ENCODE measurements at regions of chr17 and their contacts with region 1.

Region 1: DNA sequence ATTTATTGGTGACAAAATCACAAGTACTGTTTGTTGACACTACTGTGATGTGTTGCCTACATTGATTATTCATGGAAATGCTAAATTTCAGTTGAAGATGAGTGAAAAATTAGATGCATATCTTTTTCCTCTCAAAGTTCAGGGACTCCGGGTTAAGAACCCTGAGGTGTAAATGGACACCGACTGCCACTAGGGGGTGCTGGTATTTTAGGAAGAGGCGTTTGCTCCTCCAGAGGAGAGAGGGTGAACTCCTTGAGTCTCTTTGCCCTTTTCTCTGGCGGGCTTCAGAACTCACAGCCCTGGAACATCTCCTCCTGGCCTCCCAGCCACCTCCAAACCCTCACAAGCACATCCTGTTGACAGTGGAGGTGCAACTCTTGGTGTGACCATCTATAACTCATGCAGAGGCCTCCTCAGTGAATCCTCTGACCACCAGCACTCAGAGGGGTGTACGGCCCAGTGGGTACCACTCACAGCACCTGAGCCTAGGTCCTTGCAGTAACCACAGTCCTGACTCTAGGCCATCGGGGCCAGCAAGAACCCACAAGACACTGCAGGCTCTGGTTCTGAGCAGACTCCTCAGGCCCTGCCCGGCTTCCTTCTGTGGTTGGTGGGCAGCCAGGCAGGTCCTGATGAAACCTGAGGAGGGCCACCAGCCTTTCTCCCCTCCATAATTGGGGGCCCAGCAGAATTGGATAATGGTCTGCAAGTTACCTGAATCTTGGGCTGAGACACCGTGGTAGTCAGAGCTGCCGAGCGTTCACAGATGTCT is 26.2 kb upstream of the PIK3R5 start:
- DNase-seq: peak in 4 of 5 donors; percentile 44 to 63 (median 57)
- ATAC-seq: peak in 3 of 4 donors; percentile 67 to 77 (median 74)
- H3K4me3 ChIP-seq: no peak overlapping the region
- H3K27ac ChIP-seq: no peak overlapping the region
- H3K4me1 ChIP-seq: no peaks in the 10 kb centered on the region
- H3K27me3 ChIP-seq: peaks cover 0 to 10% (median 0%) of the 10 kb centered on the region in 9 donors
- CTCF ChIP-seq: peak; percentile 71 to 85 (median 76)
- POLR2A ChIP-seq: no peak

Region 2: DNA sequence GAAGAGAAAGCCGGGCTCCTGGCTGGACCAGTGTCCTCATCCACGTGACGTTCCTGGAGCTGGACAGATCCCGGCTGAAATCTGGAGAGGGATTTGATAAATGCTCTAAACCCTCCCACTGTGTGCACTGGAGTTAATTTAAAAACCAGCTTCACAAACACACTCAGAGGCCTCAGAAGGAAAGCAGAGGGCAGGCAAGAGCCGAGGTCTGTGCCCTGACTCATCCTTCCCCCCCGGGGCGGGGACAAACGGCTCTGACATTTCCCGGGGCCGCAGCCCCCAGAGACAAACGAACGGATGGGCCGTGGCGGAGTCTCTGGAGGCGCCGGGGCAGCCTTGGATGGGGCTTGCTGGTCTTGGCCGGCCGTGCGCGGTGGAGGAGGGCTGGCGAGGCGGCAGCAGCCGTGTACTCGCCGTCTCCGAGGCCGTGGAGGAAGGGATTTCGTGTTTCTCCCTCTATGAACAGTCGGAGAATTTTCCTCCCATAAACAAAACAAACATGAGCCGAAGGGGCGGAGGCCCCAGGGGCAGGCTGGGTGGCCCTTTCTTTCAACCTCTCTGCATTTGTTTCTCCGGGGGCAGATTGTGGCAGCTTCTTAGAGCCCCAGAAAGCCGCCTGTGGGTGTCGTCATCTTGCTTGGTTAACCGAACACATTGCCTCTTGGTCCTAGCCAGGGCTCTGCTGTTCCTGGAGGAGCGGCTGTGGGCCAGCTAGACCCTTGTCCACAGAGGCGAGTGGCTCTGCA is 123.9 kb after region 1 on chr17:
- intact Hi-C with region 1: loop called in 1 of 10 experiments (anchors 10 kb)
- DNase-seq: peak; percentile 64 to 85 (median 71)
- ATAC-seq: peak; percentile 70 to 92 (median 86)
- H3K4me3 ChIP-seq: peak overlapping the region in 11 of 12 donors; percentile 4 to 54 (median 40)
- H3K27ac ChIP-seq: peak overlapping the region in 9 of 12 donors; percentile 22 to 71 (median 44)
- H3K4me1 ChIP-seq: peaks cover 0 to 17% (median 5%) of the 10 kb centered on the region in 12 donors
- H3K27me3 ChIP-seq: no peaks in the 10 kb centered on the region
- CTCF ChIP-seq: peak in 9 of 12 donors; percentile 17 to 53 (median 41)
- POLR2A ChIP-seq: no peak

Region 3: GRCh38 chr17:9522074-9522473 is 530.4 kb after region 1 on chr17:
- intact Hi-C with region 1: loop called (anchors 2 to 5 kb)
- DNase-seq: peak in 1 of 5 donors; percentile 16
- ATAC-seq: peak in 3 of 4 donors; percentile 69 to 74 (median 74)
- H3K4me3 ChIP-seq: no peak overlapping the region
- H3K27ac ChIP-seq: no peak overlapping the region
- H3K4me1 ChIP-seq: peaks cover 0 to 18% (median 4%) of the 10 kb centered on the region in 12 donors
- H3K27me3 ChIP-seq: no peaks in the 10 kb centered on the region
- CTCF ChIP-seq: peak; percentile 9 to 65 (median 48)
- POLR2A ChIP-seq: no peak

Measured in heart left ventricle (tissue), 16 donors.